CD4-positive, alpha-beta memory T cell (primary cell): ENCODE measurements at regions of chrX and their contacts with region 1.

Region 1: DNA sequence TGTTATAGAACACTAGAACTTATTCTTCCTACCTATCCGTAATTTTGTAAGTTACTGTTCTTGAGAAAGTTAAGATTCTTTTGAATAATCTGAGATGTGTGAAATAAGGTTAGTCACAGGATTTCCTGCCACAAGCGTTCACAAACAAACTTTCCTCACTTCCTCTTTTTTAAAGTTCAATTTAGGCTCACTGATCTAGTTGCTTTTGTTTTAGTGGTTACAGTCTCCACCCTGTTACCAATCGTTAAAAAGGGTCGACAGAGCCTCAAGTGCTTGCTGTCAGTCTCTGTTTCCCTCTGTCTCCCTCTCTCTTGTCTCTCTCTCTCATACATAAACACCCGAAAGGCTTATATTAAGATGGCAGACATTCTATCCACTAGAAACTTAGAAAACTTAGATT is 35.9 kb upstream of the STK26 start:
- DNase-seq: peak; percentile 45 to 71 (median 64)
- H3K4me3 ChIP-seq: no peak overlapping the region
- H3K4me3 Mint-ChIP-seq: peak overlapping the region; percentile 72 to 89 (median 79)
- H3K27ac ChIP-seq: peak overlapping the region; percentile 47
- H3K27ac Mint-ChIP-seq: peak overlapping the region; percentile 90 to 99 (median 91)
- H3K4me1 ChIP-seq: peaks cover 50% of the 10 kb centered on the region
- H3K4me1 Mint-ChIP-seq: peaks cover 36 to 73% (median 45%) of the 10 kb centered on the region in 4 donors
- H3K27me3 ChIP-seq: no peaks in the 10 kb centered on the region
- H3K27me3 Mint-ChIP-seq: no peaks in the 10 kb centered on the region

Region 2: DNA sequence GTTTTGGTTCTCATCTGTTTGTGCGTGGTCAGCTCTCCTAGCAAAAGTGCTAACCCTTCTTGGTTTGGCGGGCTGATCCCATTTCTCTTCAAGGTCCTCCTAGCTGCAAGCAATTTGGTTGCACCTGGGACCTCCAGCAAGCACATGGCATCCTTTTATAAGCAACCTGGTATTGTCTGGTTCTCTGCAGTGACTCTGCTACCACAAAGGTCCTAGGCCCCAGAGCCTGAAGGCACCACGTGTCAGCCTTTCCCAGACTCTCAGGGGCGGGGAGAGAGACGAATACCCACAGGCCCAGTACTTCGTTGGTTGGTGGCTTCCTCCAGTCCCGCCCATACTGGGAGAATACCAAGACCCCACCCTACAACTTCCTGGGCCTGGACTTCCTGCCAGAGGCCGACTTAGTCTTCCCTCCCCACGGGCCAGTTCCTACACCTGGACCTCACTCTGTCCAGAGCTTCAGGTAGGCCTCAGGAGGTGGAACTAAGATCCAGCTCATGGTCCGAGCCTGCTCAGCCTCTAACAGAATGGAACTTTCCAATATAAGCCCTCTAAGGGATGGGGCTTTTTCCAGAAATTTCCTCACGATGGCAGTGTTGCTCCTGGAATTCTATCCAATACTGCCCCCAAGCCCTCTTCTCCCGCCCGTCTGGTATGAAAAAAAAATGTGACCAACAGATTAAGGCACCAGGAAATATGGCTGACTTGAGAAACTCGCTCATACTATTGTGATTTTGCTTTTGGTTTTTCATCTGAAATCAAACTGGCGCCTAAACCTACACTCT is 156.7 kb before region 1 on chrX:
- CTCF ChIA-PET with region 1: no interaction called
- POLR2A ChIA-PET with region 1: no interaction called
- intact Hi-C with region 1: no loop called
- DNase-seq: peak; percentile 48 to 76 (median 65)
- H3K4me3 ChIP-seq: peak overlapping the region in 1 of 2 donors; percentile 5
- H3K4me3 Mint-ChIP-seq: peak overlapping the region in 7 of 8 donors; percentile 1 to 79 (median 54)
- H3K27ac ChIP-seq: no peak overlapping the region
- H3K27ac Mint-ChIP-seq: peak overlapping the region; percentile 20 to 88 (median 42)
- H3K4me1 ChIP-seq: peaks cover 29% of the 10 kb centered on the region
- H3K4me1 Mint-ChIP-seq: peaks cover 8 to 35% (median 17%) of the 10 kb centered on the region in 4 donors
- H3K27me3 ChIP-seq: no peaks in the 10 kb centered on the region
- H3K27me3 Mint-ChIP-seq: no peaks in the 10 kb centered on the region

Region 3: GRCh38 chrX:131854581-131854980 is 132.7 kb before region 1 on chrX:
- CTCF ChIA-PET with region 1: no interaction called
- POLR2A ChIA-PET with region 1: no interaction called
- intact Hi-C with region 1: loop called (anchors 10 kb)
- DNase-seq: peak in 4 of 5 donors; percentile 26 to 33 (median 30)
- H3K4me3 ChIP-seq: no peak overlapping the region
- H3K4me3 Mint-ChIP-seq: no peak overlapping the region
- H3K27ac ChIP-seq: no peak overlapping the region
- H3K27ac Mint-ChIP-seq: no peak overlapping the region
- H3K4me1 ChIP-seq: no peaks in the 10 kb centered on the region
- H3K4me1 Mint-ChIP-seq: no peaks in the 10 kb centered on the region
- H3K27me3 ChIP-seq: no peaks in the 10 kb centered on the region
- H3K27me3 Mint-ChIP-seq: no peaks in the 10 kb centered on the region

Region 4: DNA sequence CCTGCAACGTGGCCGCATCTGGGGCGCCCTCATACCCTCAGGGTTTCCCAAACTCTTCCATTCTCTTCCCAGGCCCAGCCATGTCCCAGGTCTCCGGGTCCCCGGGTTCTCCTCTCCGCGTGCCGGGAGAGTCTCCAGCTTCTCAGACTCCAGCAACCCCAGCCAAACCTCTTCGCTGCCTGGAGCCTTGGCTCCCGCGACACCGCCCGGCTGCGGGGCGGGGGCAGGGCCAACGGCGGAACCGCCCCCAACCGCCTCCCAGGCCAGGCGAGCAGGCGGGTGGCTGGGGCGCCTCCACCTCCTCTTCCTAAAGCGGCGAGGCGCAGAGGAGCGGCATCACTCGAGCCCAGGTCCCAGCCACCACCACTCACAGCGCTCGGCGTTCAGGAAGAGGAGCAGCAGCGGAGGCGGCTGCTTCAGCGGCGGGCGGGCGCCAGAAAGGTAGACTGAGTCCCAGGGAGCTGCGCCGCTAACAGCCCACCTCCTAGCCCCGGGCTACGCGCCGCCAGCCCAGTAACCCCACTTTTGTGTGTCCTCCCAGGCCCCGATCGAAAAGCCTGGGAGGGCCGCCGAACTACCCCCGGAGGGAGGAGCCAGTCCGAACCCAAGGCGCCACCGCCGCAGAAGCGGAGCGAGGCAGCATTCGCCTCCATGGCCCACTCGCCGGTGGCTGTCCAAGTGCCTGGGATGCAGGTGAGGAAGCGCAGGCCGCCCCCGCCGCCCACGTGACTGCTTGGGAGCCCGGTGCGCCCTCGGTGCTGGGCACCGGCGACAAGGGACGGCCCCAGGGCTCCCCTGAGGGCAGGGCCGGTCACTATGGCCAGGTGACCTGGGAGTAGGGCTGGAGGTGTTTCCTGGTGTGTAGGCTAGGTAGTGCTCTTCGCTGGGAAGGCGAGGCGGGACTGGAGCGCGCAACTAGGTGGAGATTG is 36.0 kb after region 1 on chrX and contains the start of gene STK26:
- CTCF ChIA-PET with region 1: interaction called, 3 read pairs
- POLR2A ChIA-PET with region 1: interaction called, 14 read pairs
- intact Hi-C with region 1: loop called (anchors 2 kb)
- DNase-seq: peak; percentile 75 to 80 (median 78)
- H3K4me3 ChIP-seq: peak within 1 kb of the TSS; percentile 29 to 76
- H3K4me3 Mint-ChIP-seq: peak within 1 kb of the TSS; percentile 91 to 96 (median 94)
- H3K27ac ChIP-seq: peak within 1 kb of the TSS; percentile 75
- H3K27ac Mint-ChIP-seq: peak within 1 kb of the TSS; percentile 90 to 96 (median 94)
- H3K4me1 ChIP-seq: peaks cover 26% of the 10 kb centered on the region
- H3K4me1 Mint-ChIP-seq: peaks cover 12 to 38% (median 25%) of the 10 kb centered on the region in 4 donors
- H3K27me3 ChIP-seq: no peaks in the 10 kb centered on the region
- H3K27me3 Mint-ChIP-seq: no peaks in the 10 kb centered on the region
- total RNA-seq, gene STK26: 38.1 to 41.7 TPM

Region 5: GRCh38 chrX:132199941-132200340 is 212.7 kb after region 1 on chrX:
- CTCF ChIA-PET with region 1: no interaction called
- POLR2A ChIA-PET with region 1: no interaction called
- intact Hi-C with region 1: no loop called
- DNase-seq: no peak
- H3K4me3 ChIP-seq: no peak overlapping the region
- H3K4me3 Mint-ChIP-seq: no peak overlapping the region
- H3K27ac ChIP-seq: no peak overlapping the region
- H3K27ac Mint-ChIP-seq: peak overlapping the region in 2 of 7 donors; percentile 9 to 61
- H3K4me1 ChIP-seq: no peaks in the 10 kb centered on the region
- H3K4me1 Mint-ChIP-seq: peaks cover 0 to 2% (median 0%) of the 10 kb centered on the region in 4 donors
- H3K27me3 ChIP-seq: no peaks in the 10 kb centered on the region
- H3K27me3 Mint-ChIP-seq: no peaks in the 10 kb centered on the region